GM10248 (cell line): ENCODE measurements at regions of chr15 and their contacts with region 1.

Region 1: GRCh38 chr15:38563723-38564519 is 693 bp downstream of the RASGRP1 start:
- DNase-seq: peak; percentile 83
- CTCF ChIP-seq: peak; percentile 97

Region 2: GRCh38 chr15:38440353-38441129 is 123.4 kb before region 1 on chr15:
- CTCF ChIA-PET with region 1: interaction called, 33 read pairs
- POLR2A ChIA-PET with region 1: no interaction called
- DNase-seq: peak; percentile 55
- CTCF ChIP-seq: peak; percentile 92

Region 3: GRCh38 chr15:38512901-38513300 is 51.0 kb before region 1 on chr15:
- CTCF ChIA-PET with region 1: interaction called, 12 read pairs
- POLR2A ChIA-PET with region 1: no interaction called
- DNase-seq: no peak
- CTCF ChIP-seq: no peak

Region 4: GRCh38 chr15:38576837-38577236 is 12.9 kb after region 1 on chr15:
- CTCF ChIA-PET with region 1: interaction called, 15 read pairs
- POLR2A ChIA-PET with region 1: interaction called, 3 read pairs
- DNase-seq: no peak
- CTCF ChIP-seq: no peak

Region 5: DNA sequence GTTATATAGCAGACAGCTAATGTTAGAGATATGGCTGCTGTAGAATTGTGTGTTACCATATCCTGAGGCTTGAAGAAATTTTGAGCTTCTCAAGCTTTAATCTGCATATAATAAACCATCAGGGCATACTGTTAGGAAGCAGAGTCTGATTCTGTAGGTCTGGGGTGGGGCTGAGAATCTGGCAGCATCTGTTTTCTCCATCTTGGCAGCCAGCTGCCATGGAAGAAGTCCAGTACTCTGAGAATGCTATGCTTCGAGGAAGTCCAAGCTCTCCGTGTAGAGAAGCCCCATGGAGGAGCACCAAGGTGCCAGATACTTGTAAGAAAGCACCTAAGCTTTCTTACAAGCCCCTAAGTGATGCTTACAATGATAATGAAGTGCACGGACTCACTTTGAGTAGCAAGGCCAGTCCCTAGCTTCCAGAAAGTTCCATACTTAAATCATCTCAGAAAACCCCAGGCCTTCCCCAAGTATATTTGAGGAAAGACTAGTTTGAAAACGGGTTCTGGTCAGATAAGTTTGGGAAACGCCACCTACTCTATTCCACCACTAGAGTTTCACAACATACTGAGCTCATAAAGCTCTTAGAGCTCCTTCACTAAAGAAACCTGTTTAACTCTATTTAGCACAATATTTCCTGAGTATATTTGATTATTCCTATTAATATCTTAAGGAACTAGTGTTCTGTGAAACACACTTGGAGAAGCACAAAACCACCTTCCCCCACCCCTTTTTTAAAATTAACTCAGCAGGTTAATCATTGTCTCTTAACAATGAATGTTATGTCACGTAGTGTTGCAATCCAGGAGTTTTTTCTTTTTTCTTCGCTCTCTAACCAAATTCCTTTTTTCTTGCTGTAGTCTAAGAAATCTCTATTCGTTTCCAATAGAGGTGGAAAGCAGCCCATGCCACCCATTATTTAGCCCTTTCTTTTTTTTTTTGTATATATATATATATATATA is 60.6 kb after region 1 on chr15:
- CTCF ChIA-PET with region 1: interaction called, 22 read pairs
- POLR2A ChIA-PET with region 1: interaction called, 6 read pairs
- DNase-seq: no peak
- CTCF ChIP-seq: no peak

Region 6: DNA sequence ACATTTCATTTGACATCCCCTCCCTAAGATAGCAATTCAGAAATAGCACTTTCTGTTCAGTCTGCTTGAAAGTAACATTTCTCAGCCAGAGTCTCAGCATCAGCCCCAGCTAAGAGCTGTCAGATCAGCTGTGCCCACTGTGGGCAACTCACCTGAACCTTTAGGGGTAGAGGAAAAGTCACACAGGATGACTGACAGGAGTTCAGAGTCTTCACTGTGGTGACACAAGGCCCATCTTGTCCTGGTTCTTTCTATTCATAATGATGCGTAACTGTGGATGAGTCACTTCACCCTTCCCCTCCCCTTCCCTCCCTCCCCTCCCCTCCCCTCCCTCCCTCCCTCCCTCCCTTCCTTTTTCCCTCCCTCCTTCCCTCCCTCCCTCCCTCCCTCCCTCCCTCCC is 96.8 kb after region 1 on chr15:
- CTCF ChIA-PET with region 1: interaction called, 30 read pairs
- POLR2A ChIA-PET with region 1: interaction called, 4 read pairs
- DNase-seq: no peak
- CTCF ChIP-seq: no peak

Region 7: DNA sequence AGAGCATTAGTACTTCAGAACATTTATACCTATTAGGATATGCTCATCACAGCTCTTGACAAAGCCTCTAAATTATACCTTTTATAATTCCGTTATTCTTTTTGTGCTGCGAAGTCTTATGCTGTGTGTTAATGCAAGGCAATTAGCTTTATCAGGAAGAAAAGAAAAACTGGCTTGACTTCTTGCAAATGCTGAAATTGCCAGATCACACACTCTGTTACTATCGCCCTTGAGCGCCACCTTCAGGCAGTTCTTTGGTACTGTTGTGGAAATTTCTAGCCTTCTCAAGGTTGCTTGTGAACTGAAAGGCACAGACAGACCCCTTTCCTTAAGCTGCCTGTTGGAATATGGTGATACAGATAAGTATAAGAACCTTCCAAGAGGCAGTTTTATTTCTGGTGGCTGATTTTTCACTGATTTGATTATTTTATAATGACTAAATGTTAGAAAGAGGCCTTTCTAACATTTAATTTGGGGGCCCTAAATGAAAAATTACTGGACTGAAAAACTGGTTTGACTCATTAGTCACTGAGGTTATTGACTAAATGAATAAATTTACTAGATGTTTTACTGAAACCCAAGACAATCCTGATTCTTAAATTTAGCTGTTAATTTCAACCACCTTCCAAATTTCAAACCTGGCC is 126.9 kb after region 1 on chr15:
- CTCF ChIA-PET with region 1: interaction called, 179 read pairs
- POLR2A ChIA-PET with region 1: interaction called, 5 read pairs
- DNase-seq: peak; percentile 49
- CTCF ChIP-seq: peak; percentile 77